ENCODE measurements at regions of chr11 and their contacts with region 1.

Region 1: GRCh38 chr11:70755410-70756161 is 357.3 kb downstream of the CTTN start:
- DNase-seq: peak; percentile 67 to 93 (median 84)

Region 2: GRCh38 chr11:70467201-70468085 is 288.1 kb before region 1 on chr11:
- intact Hi-C with region 1: loop called (anchors 5 kb)
- DNase-seq: peak; percentile 48 to 92 (median 78)

Region 3: GRCh38 chr11:70834277-70834940 is 78.8 kb after region 1 on chr11:
- intact Hi-C with region 1: no loop called
- DNase-seq: peak in 14 of 42 donors; percentile 14 to 68 (median 33)

Region 4: GRCh38 chr11:71302911-71303310 is 547.3 kb after region 1 on chr11:
- intact Hi-C with region 1: no loop called
- DNase-seq: peak in 5 of 42 donors; percentile 2 to 11 (median 9)

Measured in head of caudate nucleus (tissue), 42 donors.